HCT116 (cell line): ENCODE measurements at regions of chr14 and their contacts with region 1.

Region 1: GRCh38 chr14:89033756-89034155 is 209.3 kb downstream of the TTC8 start:
- DNase-seq: no peak
- ATAC-seq: no peak
- H3K4me3 ChIP-seq: no peak overlapping the region
- H3K27ac ChIP-seq: no peak overlapping the region
- H3K4me1 ChIP-seq: no peaks in the 10 kb centered on the region
- H3K27me3 ChIP-seq: no peaks in the 10 kb centered on the region
- CTCF ChIP-seq: no peak
- POLR2A ChIP-seq: no peak
- RAD21 ChIP-seq: no peak

Region 2: DNA sequence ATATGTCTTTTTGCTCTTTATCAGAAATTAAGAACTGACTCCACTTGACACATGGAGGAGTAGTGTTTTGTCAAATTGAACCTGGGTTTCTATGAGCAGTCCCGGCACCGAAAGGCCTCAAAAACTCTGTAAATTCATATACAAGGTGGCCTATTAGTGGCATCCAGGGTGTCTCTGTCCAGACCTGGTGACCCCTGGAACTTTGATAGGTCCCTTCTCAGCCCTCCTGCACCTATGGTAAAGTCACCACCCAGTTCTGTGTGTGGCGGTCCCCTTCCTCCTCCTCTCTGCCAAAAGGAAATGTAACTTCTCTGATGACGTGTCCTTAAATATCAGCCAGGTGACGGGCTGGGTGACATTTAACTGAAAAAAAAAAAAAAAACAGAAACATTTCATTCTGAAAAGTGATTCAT is 587.3 kb after region 1 on chr14:
- CTCF ChIA-PET with region 1: no interaction called
- POLR2A ChIA-PET with region 1: no interaction called
- RAD21 ChIA-PET with region 1: no interaction called
- intact Hi-C with region 1: loop called (anchors 5 kb)
- DNase-seq: no peak
- ATAC-seq: no peak
- H3K4me3 ChIP-seq: no peak overlapping the region
- H3K27ac ChIP-seq: no peak overlapping the region
- H3K4me1 ChIP-seq: peaks cover 7 to 14% of the 10 kb centered on the region in 2 experiments; a peak in 3 of 4 replicates
- H3K27me3 ChIP-seq: no peaks in the 10 kb centered on the region
- CTCF ChIP-seq: no peak
- POLR2A ChIP-seq: no peak
- RAD21 ChIP-seq: no peak